ENCODE measurements at regions of chr15 and their contacts with region 1.

Region 1: DNA sequence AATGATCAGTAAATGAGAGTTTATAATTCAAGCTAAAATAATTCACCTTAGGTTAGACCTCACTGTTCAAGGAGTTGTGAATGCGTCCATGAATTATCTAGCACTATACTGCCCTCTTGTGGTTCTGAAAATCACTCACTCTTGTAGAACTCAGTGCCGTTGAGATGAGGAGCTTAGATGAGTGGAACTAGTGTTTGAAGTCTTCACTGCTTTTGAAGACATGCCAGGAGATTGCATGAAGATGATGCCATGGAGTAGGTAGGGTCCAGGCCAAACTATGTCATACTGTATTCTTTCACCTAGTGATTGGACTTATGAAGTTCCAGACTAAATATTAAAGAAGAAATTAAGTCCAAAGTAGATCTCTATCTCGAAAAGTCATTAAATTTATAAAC is 28.8 kb downstream of the LYSMD4 start:
- DNase-seq: no peak
- H3K4me3 ChIP-seq: no peak overlapping the region
- H3K27ac ChIP-seq: peak overlapping the region; percentile 82 to 83
- H3K4me1 ChIP-seq: peaks cover 0 to 26% of the 10 kb centered on the region in 2 donors
- H3K27me3 ChIP-seq: no peaks in the 10 kb centered on the region
- CTCF ChIP-seq: peak; percentile 66 to 73 (median 66)

Region 2: DNA sequence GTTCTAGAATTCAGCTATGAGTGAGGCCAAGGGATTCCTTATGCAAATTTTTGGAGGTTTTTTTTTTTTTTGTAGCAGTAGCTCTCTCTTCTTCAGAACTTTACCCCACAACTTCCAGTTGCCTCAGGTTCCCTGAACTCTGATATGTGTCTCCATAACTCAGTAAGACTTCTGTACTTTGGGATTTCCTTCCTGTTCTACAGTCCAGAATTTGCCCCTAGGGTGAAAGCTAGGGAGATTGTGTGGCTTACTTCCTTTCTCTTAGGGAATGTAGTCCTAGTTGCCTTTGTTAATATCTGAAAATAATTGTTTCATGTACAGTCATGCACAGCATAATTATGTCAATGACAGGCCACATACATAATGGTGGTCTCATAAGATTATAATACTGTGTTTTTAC is 422.3 kb before region 1 on chr15:
- intact Hi-C with region 1: loop called (anchors 1 kb)
- DNase-seq: no peak
- H3K4me3 ChIP-seq: no peak overlapping the region
- H3K27ac ChIP-seq: no peak overlapping the region
- H3K4me1 ChIP-seq: peaks cover 0 to 7% of the 10 kb centered on the region in 2 donors
- H3K27me3 ChIP-seq: no peaks in the 10 kb centered on the region
- CTCF ChIP-seq: no peak

Region 3: GRCh38 chr15:99343881-99344551 is 360.4 kb before region 1 on chr15:
- intact Hi-C with region 1: loop called (anchors 5 kb)
- DNase-seq: no peak
- H3K4me3 ChIP-seq: no peak overlapping the region
- H3K27ac ChIP-seq: no peak overlapping the region
- H3K4me1 ChIP-seq: peaks cover 0 to 5% of the 10 kb centered on the region in 2 donors
- H3K27me3 ChIP-seq: no peaks in the 10 kb centered on the region
- CTCF ChIP-seq: peak; percentile 15 to 53 (median 39)

Region 4: GRCh38 chr15:99409097-99409473 is 295.4 kb before region 1 on chr15:
- intact Hi-C with region 1: loop called (anchors 10 kb)
- DNase-seq: peak in 1 of 2 donors; percentile 83
- H3K4me3 ChIP-seq: no peak overlapping the region
- H3K27ac ChIP-seq: peak overlapping the region; percentile 69 to 80
- H3K4me1 ChIP-seq: peaks cover 4 to 19% of the 10 kb centered on the region in 2 donors
- H3K27me3 ChIP-seq: no peaks in the 10 kb centered on the region
- CTCF ChIP-seq: peak; percentile 28 to 56 (median 31)

Region 5: GRCh38 chr15:99442252-99442897 is 262.1 kb before region 1 on chr15:
- intact Hi-C with region 1: loop called (anchors 5 kb)
- DNase-seq: peak in 1 of 2 donors; percentile 91
- H3K4me3 ChIP-seq: peak overlapping the region in 1 of 2 donors; percentile 37
- H3K27ac ChIP-seq: peak overlapping the region; percentile 85 to 93
- H3K4me1 ChIP-seq: peaks cover 16 to 37% of the 10 kb centered on the region in 2 donors
- H3K27me3 ChIP-seq: no peaks in the 10 kb centered on the region
- CTCF ChIP-seq: no peak

Region 6: DNA sequence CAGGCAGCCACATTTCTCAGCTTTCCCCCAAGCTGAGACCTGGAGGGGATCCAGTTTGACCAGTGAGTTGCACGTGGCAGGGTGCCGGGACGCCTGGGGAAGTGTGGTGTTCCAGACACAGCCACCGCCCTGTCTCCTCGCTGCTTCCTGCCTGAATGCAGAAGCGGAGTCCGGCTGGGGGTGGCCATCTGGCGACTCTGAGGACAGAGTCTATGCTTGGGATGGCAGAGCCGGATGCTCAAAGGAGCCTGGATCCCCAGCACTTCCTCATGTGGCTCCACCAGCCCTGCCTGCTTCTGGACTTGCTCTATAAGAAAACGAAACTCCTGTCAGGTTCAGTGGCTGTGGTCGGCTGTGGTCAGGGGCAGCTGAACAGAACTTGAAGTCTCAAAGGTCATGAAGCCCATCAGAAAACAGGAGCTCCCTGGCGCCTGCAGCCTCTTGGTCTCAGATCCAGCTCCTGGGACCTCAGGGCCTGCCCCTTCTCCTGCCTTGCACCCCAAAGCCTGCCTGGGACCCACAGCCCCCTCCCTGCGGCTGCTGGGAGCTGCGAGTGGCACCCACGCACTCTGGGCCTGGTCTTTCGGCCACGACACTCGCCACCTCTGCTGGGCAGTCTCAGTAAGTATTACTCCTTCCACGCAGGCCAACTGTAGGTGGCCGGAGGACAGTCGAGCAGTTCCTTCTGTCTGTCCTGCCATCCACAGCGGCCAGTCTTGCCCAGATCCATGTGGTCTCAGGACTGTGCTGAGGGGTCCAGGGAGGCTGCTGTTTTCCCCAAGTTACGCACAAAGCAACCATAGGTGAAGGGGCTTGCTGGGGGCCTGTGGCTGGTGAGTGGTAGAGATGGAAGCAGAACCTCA is 251.4 kb before region 1 on chr15:
- intact Hi-C with region 1: loop called (anchors 1 kb)
- DNase-seq: peak; percentile 87 to 96
- H3K4me3 ChIP-seq: peak overlapping the region in 1 of 2 donors; percentile 50
- H3K27ac ChIP-seq: peak overlapping the region; percentile 95 to 96
- H3K4me1 ChIP-seq: peaks cover 21 to 36% of the 10 kb centered on the region in 2 donors
- H3K27me3 ChIP-seq: no peaks in the 10 kb centered on the region
- CTCF ChIP-seq: no peak

Region 7: GRCh38 chr15:99618941-99619411 is 85.5 kb before region 1 on chr15:
- intact Hi-C with region 1: no loop called
- DNase-seq: no peak
- H3K4me3 ChIP-seq: no peak overlapping the region
- H3K27ac ChIP-seq: peak overlapping the region in 1 of 2 donors; percentile 6
- H3K4me1 ChIP-seq: peaks cover 6 to 20% of the 10 kb centered on the region in 2 donors
- H3K27me3 ChIP-seq: no peaks in the 10 kb centered on the region
- CTCF ChIP-seq: no peak

Region 8: DNA sequence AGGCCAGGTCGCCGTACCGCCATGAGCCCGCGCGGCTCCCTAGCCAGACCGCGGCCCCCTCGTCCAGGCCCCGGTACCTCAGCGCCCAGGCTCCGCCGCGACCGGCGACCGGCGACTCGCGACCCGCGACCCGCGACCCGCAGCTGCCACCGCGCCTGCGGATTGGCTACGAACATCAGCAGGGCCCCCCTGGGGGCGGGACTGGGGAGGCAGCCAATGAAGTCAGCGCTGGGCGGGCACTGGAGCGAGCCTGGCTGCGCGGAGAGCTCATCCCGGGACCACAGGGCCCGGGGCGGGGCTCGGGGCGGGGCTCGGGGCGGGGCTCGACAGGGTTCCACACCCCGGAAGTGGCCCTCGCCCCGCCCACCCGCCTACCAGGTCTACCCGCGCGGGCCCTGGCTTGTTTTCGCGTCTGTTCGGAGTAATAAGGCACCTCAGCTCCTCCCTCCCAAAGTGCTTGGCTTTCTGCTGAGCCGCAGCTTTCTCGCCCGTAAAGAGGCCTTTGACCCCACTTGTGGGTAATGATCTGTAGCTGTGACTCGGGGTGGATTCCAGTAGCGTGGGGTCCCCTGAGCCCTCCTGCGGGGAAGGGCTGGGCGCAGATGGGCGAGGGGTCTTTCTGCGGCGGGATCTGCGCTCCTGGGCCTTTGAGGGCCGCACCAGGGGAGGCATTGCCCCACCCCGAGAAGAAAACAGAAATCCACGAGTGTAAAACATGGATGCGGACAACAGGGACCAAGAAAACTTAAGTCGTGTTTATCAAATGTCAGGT is 29.0 kb after region 1 on chr15 and contains the start of gene LYSMD4:
- intact Hi-C with region 1: loop called (anchors 2 kb)
- DNase-seq: peak; percentile 90 to 99
- H3K4me3 ChIP-seq: peak within 1 kb of the TSS; percentile 79 to 81
- H3K27ac ChIP-seq: peak within 1 kb of the TSS; percentile 83 to 84
- H3K4me1 ChIP-seq: peaks cover 0 to 21% of the 10 kb centered on the region in 2 donors
- H3K27me3 ChIP-seq: no peaks in the 10 kb centered on the region
- CTCF ChIP-seq: no peak
- total RNA-seq, gene LYSMD4: not detected

Region 9: DNA sequence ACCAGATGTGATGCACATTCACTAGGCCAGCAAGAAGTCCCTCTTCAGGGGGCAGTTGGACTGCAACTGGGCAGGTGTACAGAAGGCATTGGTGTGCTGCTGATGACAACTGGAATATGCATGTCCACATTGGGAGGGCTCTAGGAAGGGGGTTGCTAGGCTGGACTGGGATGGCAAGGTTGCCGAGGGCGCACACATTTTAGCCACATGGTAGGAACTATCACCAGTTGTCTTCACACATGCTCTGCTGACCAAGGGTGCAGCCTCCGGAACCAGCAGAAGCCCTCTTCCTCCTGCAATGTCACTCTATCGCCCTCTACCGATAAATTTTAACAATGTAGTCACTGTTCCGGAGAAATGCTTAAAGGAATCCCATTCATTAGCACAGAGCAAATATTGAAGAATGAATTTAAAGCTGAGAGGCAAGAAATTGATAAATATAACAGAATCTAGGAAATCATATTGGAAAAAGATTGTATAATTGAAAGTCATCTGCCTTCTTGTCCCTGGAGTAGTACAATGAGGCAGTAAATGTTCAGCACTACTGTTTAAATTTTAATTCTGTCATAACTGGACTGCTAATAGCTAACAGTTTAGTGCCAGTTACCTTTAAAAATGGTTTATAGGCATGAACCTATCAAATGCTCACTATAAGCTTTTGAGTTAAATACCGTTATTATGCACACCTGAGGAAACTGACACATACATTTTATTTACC is 51.4 kb after region 1 on chr15:
- intact Hi-C with region 1: no loop called
- DNase-seq: no peak
- H3K4me3 ChIP-seq: no peak overlapping the region
- H3K27ac ChIP-seq: no peak overlapping the region
- H3K4me1 ChIP-seq: no peaks in the 10 kb centered on the region
- H3K27me3 ChIP-seq: no peaks in the 10 kb centered on the region
- CTCF ChIP-seq: peak; percentile 52 to 87 (median 74)